AG04450 (cell line): ENCODE measurements at regions of chr14 and their contacts with region 1.

Region 1: GRCh38 chr14:91963465-91963864 is 16.0 kb upstream of the FBLN5 start:
- DNase-seq: no peak
- H3K4me3 ChIP-seq: no peak overlapping the region
- H3K27ac ChIP-seq: no peak overlapping the region
- H3K27me3 ChIP-seq: no peaks in the 10 kb centered on the region
- CTCF ChIP-seq: no peak

Region 2: DNA sequence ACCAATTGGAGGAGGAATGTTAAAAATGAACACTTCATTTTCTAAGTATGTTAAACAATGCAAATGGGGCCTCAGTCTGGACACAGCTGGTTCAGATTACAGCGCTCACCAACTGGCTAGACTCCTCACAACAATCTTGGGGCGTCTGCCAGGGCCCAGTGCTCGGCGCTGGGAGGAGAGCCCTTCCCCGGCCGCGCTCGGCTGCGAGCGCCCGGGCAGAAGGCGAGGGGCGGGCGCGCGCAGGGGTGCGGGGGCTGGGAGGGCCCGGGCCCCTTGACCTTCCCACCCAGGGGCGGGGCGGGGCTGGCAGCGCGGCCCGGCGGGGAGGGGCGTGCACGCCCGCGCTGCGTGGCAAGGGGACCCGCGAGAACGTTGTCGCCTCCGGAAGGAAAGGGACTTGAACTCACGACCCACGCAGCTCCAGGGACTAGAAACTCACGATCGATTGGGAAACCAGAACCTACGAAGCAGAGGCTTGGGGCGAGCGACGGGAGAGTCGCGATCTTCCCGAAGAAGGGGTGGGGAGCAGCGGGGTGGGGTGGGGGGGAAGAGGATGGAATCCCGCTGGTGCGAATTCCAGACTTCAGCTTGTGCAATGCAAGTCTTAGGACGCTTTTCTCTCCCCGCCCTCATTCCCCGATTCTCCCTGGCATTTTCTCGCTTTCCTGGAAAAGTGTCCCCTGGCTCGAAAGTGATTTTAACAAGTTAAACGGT is 15.8 kb before region 1 on chr14 and contains the start of gene FBLN5:
- CTCF ChIA-PET with region 1: interaction called, 4 read pairs
- POLR2A ChIA-PET with region 1: interaction called, 11 read pairs
- DNase-seq: peak; percentile 74
- H3K4me3 ChIP-seq: peak within 1 kb of the TSS; percentile 78
- H3K27ac ChIP-seq: peak within 1 kb of the TSS; percentile 80
- H3K27me3 ChIP-seq: no peaks in the 10 kb centered on the region
- CTCF ChIP-seq: no peak
- polyA plus RNA-seq, gene FBLN5: 116 and 176 TPM in 2 replicates

Region 3: GRCh38 chr14:91985521-91986255 is 22.2 kb after region 1 on chr14:
- CTCF ChIA-PET with region 1: no interaction called
- POLR2A ChIA-PET with region 1: interaction called, 10 read pairs
- DNase-seq: no peak
- H3K4me3 ChIP-seq: no peak overlapping the region
- H3K27ac ChIP-seq: no peak overlapping the region
- H3K27me3 ChIP-seq: no peaks in the 10 kb centered on the region
- CTCF ChIP-seq: no peak